GM12878 (cell line): ENCODE measurements at regions of chr13 and their contacts with region 1.

Region 1: DNA sequence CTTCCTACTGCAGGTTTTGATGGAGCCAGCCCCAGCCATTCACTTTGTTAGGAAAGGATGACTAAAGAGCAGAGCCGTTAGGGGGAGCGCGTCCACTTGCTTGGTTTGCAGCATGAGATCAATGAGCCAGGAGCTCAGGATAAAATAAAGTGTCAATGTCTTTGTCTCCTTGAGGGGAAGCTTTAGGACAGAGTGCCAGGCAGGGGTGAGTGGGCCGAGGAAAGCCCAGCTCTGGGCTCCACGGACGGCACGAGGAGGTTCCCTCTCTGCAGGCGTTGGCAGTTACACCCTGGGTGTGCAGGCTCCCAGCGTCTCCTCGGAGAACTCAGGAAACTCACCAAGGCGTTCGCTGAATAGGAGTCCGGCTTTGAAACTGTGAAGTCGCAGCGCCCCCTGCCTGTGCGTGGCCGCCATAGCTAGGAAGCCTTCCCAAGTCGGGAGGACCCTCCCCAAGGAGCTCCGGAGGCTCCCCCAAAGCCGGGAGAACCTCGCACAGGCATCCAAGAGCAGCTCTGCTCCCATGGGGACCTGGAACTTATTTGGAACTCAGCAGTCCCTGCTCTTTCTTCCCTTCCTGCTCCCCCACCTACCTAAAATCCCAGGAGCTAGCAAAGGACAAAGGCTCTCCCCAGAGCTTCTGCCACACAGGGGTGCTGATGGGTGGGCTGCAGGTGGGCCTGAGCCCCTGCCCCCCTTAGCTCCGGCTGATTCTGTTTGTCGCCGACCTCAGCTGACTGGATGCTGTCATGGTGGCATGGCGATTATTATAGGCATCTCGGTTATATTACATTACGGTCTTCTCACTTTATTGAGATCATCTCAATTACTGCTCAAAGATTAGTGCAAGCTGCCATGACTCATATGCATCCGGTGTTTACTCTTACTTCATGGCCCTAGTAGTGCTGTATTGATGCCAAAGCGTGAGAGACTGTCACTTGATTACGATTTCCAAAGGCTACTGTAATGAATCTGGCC is 34.4 kb downstream of the GSX1 start:
- DNase-seq: peak; percentile 12
- ATAC-seq: peak; percentile 83
- H3K4me3 ChIP-seq: no peak overlapping the region
- H3K27ac ChIP-seq: no peak overlapping the region
- H3K4me1 ChIP-seq: no peaks in the 10 kb centered on the region
- H3K27me3 ChIP-seq: peaks cover 2 to 6% of the 10 kb centered on the region in 2 experiments
- CTCF ChIP-seq: peak; percentile 87 to 96 (median 94)
- EP300 ChIP-seq: no peak
- POLR2A ChIP-seq: no peak
- RAD21 ChIP-seq: peak; percentile 87

Region 2: GRCh38 chr13:27353166-27353583 is 473.5 kb before region 1 on chr13:
- CTCF ChIA-PET with region 1: interaction called, 10 read pairs
- POLR2A ChIA-PET with region 1: no interaction called
- RAD21 ChIA-PET with region 1: interaction called, 3 read pairs
- SMC1A ChIA-PET with region 1: interaction called, 3 read pairs
- in situ Hi-C with region 1: no loop called
- intact Hi-C with region 1: no loop called
- DNase-seq: peak; percentile 89
- ATAC-seq: peak; percentile 99
- H3K4me3 ChIP-seq: peak overlapping the region; percentile 42; the same call in 1 of the 2 replicates
- H3K27ac ChIP-seq: peak overlapping the region; percentile 40; the same call in 1 of the 2 replicates
- H3K4me1 ChIP-seq: peaks cover 12% of the 10 kb centered on the region
- H3K27me3 ChIP-seq: no peaks in the 10 kb centered on the region
- CTCF ChIP-seq: no peak
- EP300 ChIP-seq: peak; percentile 17 to 59; a peak in 2 of 4 replicates
- POLR2A ChIP-seq: no peak
- RAD21 ChIP-seq: 0 out of 2 replicates have a peak, but pooled peaks have one; percentile 13

Region 3: GRCh38 chr13:27406178-27406939 is 420.3 kb before region 1 on chr13:
- CTCF ChIA-PET with region 1: interaction called, 23 read pairs
- POLR2A ChIA-PET with region 1: no interaction called
- RAD21 ChIA-PET with region 1: interaction called, 5 read pairs
- SMC1A ChIA-PET with region 1: interaction called, 8 read pairs
- in situ Hi-C with region 1: no loop called
- intact Hi-C with region 1: loop called (anchors 1 kb)
- DNase-seq: no peak
- ATAC-seq: peak; percentile 81
- H3K4me3 ChIP-seq: no peak overlapping the region
- H3K27ac ChIP-seq: no peak overlapping the region
- H3K4me1 ChIP-seq: no peaks in the 10 kb centered on the region
- H3K27me3 ChIP-seq: no peaks in the 10 kb centered on the region; a peak in 2 of 4 replicates
- CTCF ChIP-seq: peak; percentile 46 to 64 (median 60)
- EP300 ChIP-seq: no peak
- POLR2A ChIP-seq: no peak
- RAD21 ChIP-seq: peak; percentile 64

Region 4: GRCh38 chr13:27556109-27556508 is 270.6 kb before region 1 on chr13:
- CTCF ChIA-PET with region 1: interaction called, 41 read pairs
- POLR2A ChIA-PET with region 1: no interaction called
- RAD21 ChIA-PET with region 1: interaction called, 8 read pairs
- SMC1A ChIA-PET with region 1: interaction called, 6 read pairs
- in situ Hi-C with region 1: no loop called
- intact Hi-C with region 1: loop called (anchors 1 kb)
- DNase-seq: no peak
- ATAC-seq: no peak
- H3K4me3 ChIP-seq: no peak overlapping the region
- H3K27ac ChIP-seq: no peak overlapping the region
- H3K4me1 ChIP-seq: no peaks in the 10 kb centered on the region
- H3K27me3 ChIP-seq: no peaks in the 10 kb centered on the region
- CTCF ChIP-seq: peak in 1 of 3 experiments; percentile 27; a peak in 2 of 6 replicates
- EP300 ChIP-seq: no peak
- POLR2A ChIP-seq: no peak
- RAD21 ChIP-seq: peak; percentile 38; the same call in 1 of the 2 replicates

Region 5: DNA sequence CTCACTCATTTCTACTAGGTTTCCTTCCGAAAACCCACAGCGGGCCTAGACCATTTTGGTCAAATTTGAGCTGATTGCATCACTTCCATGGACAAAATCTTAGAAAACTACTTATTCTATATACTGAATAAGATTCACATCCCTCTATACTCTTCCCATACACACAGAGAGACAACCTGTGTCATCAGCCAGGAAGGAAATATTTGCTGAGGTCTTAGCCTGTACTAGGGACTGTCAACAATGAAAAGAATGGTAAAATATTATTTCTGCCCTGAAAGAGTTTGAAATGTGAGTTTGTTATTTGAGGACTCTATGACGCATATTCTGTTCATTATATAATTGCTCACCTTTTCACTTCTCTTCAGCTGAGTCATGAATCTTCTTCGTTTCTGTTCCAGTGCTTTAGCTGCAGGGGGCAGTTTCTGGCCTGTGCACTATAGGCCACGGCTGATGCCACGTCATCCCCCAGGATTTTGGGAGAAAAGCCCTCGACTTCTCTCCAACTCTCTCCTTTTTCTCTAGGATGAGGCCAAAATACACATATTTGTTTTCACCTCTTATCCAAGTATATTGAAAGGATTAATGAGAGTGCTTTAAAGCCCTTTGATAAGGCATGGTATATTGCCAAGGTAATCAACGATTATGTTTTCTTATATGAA is 13.3 kb after region 1 on chr13:
- CTCF ChIA-PET with region 1: interaction called, 27 read pairs
- POLR2A ChIA-PET with region 1: no interaction called
- RAD21 ChIA-PET with region 1: interaction called, 3 read pairs
- SMC1A ChIA-PET with region 1: interaction called, 10 read pairs
- in situ Hi-C with region 1: no loop called
- intact Hi-C with region 1: no loop called
- DNase-seq: no peak
- ATAC-seq: no peak
- H3K4me3 ChIP-seq: no peak overlapping the region
- H3K27ac ChIP-seq: no peak overlapping the region
- H3K4me1 ChIP-seq: no peaks in the 10 kb centered on the region
- H3K27me3 ChIP-seq: no peaks in the 10 kb centered on the region
- CTCF ChIP-seq: no peak
- EP300 ChIP-seq: no peak
- POLR2A ChIP-seq: no peak
- RAD21 ChIP-seq: no peak

Region 6: GRCh38 chr13:27953676-27954405 is 127.2 kb after region 1 on chr13:
- CTCF ChIA-PET with region 1: interaction called, 360 read pairs
- POLR2A ChIA-PET with region 1: interaction called, 7 read pairs
- RAD21 ChIA-PET with region 1: interaction called, 163 read pairs
- SMC1A ChIA-PET with region 1: interaction called, 112 read pairs
- in situ Hi-C with region 1: no loop called
- intact Hi-C with region 1: loop called (anchors 1 kb)
- DNase-seq: no peak
- ATAC-seq: peak; percentile 99
- H3K4me3 ChIP-seq: peak overlapping the region; percentile 43; the same call in 1 of the 2 replicates
- H3K27ac ChIP-seq: no peak overlapping the region
- H3K4me1 ChIP-seq: peaks cover 9% of the 10 kb centered on the region
- H3K27me3 ChIP-seq: peaks cover 9 to 10% of the 10 kb centered on the region in 2 experiments
- CTCF ChIP-seq: peak; percentile 81 to 88 (median 85)
- EP300 ChIP-seq: no peak
- POLR2A ChIP-seq: no peak
- RAD21 ChIP-seq: peak; percentile 82